CD8-positive, alpha-beta T cell (primary cell): ENCODE measurements at regions of chr19 and their contacts with region 1.

Region 1: GRCh38 chr19:14556662-14557188 is 15.1 kb downstream of the NDUFB7 start:
- DNase-seq: peak; percentile 44 to 85 (median 72)
- ATAC-seq: peak; percentile 87
- H3K4me3 ChIP-seq: peak overlapping the region; percentile 12 to 26
- H3K4me3 Mint-ChIP-seq: peak overlapping the region; percentile 60
- H3K27ac ChIP-seq: peak overlapping the region in 1 of 2 experiments; percentile 70
- H3K27ac Mint-ChIP-seq: peak overlapping the region; percentile 90
- H3K4me1 ChIP-seq: peaks cover 53% of the 10 kb centered on the region
- H3K4me1 Mint-ChIP-seq: peaks cover 53% of the 10 kb centered on the region
- H3K27me3 ChIP-seq: no peaks in the 10 kb centered on the region
- H3K27me3 Mint-ChIP-seq: no peaks in the 10 kb centered on the region
- CTCF ChIP-seq: peak; percentile 96

Region 2: DNA sequence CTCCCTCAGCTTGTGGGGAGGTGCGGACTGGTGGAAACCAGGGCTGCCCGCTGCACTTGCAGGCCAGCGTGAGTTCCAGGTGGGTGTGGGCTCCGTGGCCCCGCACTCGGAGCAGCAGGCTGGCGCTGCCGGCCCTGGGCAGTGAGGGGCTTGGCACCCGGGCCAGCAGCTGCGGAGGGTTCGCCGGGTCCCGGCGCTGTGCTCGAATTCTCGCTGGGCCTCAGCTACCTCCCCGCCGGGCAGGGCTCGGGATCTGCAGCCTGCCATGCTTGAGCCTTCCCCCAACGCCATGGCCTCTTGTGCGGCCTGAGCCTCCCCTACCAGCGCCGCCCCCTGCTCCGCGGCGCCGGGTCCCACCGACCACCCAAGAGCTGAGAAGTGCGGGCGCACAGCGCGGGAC is 279.1 kb before region 1 on chr19:
- CTCF ChIA-PET with region 1: no interaction called
- POLR2A ChIA-PET with region 1: no interaction called
- intact Hi-C with region 1: no loop called
- DNase-seq: no peak
- ATAC-seq: no peak
- H3K4me3 ChIP-seq: no peak overlapping the region
- H3K4me3 Mint-ChIP-seq: no peak overlapping the region
- H3K27ac ChIP-seq: no peak overlapping the region
- H3K27ac Mint-ChIP-seq: no peak overlapping the region
- H3K4me1 ChIP-seq: peaks cover 8% of the 10 kb centered on the region
- H3K4me1 Mint-ChIP-seq: peaks cover 15% of the 10 kb centered on the region
- H3K27me3 ChIP-seq: no peaks in the 10 kb centered on the region
- H3K27me3 Mint-ChIP-seq: no peaks in the 10 kb centered on the region
- CTCF ChIP-seq: no peak

Region 3: DNA sequence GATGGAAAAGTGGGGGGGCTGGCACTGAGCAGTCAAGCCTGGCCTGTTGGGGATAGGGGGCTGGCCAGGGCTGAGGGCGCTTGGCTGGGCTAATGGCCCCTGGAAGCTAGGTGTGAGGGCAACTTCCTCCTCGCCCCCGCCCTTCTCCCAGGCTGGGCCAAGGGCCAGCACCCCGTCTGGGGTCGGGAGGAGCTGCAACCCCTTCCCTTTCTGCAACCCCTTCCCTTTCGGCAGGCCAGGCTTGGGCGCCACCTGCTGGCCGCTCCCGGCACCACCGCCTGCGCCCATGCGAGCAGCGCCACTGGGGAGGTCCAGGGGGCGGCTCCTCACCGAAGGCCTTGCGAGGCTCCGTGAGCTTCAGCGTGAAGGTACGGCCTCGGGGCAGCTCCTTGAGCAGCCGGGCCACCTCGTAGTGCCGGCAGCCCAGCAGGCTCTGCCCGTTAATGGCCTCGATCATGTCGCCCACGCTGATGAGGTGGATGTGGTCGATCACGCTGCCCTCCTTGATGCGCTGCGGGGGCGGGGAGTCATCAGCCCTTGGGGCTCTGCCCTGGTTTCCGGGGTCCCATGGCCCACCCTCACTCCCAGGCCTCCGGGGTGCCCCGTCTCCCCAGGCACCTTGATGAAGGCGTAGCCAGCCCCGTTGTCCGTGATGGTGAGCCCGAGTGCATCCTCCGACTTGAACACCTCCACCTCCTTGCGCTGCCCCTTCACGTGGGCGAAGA is 76.6 kb before region 1 on chr19:
- CTCF ChIA-PET with region 1: interaction called, 13 read pairs
- POLR2A ChIA-PET with region 1: no interaction called
- intact Hi-C with region 1: no loop called
- DNase-seq: peak; percentile 55 to 85 (median 64)
- ATAC-seq: peak; percentile 52
- H3K4me3 ChIP-seq: no peak overlapping the region
- H3K4me3 Mint-ChIP-seq: no peak overlapping the region
- H3K27ac ChIP-seq: no peak overlapping the region
- H3K27ac Mint-ChIP-seq: no peak overlapping the region
- H3K4me1 ChIP-seq: peaks cover 16% of the 10 kb centered on the region
- H3K4me1 Mint-ChIP-seq: peaks cover 16% of the 10 kb centered on the region
- H3K27me3 ChIP-seq: peaks cover 0 to 5% of the 10 kb centered on the region in 2 experiments
- H3K27me3 Mint-ChIP-seq: peaks cover 2% of the 10 kb centered on the region
- CTCF ChIP-seq: peak; percentile 93

Region 4: GRCh38 chr19:14496028-14496833 is 60.5 kb before region 1 on chr19 and contains the start of gene GIPC1:
- CTCF ChIA-PET with region 1: interaction called, 12 read pairs
- POLR2A ChIA-PET with region 1: interaction called, 3 read pairs
- intact Hi-C with region 1: no loop called
- DNase-seq: peak; percentile 53 to 89 (median 80)
- ATAC-seq: peak; percentile 86
- H3K4me3 ChIP-seq: peak within 1 kb of the TSS; percentile 62 to 97
- H3K4me3 Mint-ChIP-seq: peak within 1 kb of the TSS; percentile 81
- H3K27ac ChIP-seq: peak within 1 kb of the TSS; percentile 42 to 58
- H3K27ac Mint-ChIP-seq: peak within 1 kb of the TSS; percentile 90
- H3K4me1 ChIP-seq: peaks cover 19% of the 10 kb centered on the region
- H3K4me1 Mint-ChIP-seq: peaks cover 24% of the 10 kb centered on the region
- H3K27me3 ChIP-seq: no peaks in the 10 kb centered on the region
- H3K27me3 Mint-ChIP-seq: no peaks in the 10 kb centered on the region
- CTCF ChIP-seq: no peak
- total RNA-seq, gene GIPC1: 15.6 to 16.0 TPM

Region 5: GRCh38 chr19:14505488-14506432 is 51.0 kb before region 1 on chr19:
- CTCF ChIA-PET with region 1: interaction called, 49 read pairs
- POLR2A ChIA-PET with region 1: interaction called, 11 read pairs
- intact Hi-C with region 1: loop called (anchors 1 kb)
- DNase-seq: peak; percentile 50 to 87 (median 76)
- ATAC-seq: peak; percentile 51
- H3K4me3 ChIP-seq: peak overlapping the region in 1 of 2 experiments; percentile 25
- H3K4me3 Mint-ChIP-seq: peak overlapping the region; percentile 56
- H3K27ac ChIP-seq: peak overlapping the region; percentile 62 to 76
- H3K27ac Mint-ChIP-seq: peak overlapping the region; percentile 96
- H3K4me1 ChIP-seq: peaks cover 49% of the 10 kb centered on the region
- H3K4me1 Mint-ChIP-seq: peaks cover 64% of the 10 kb centered on the region
- H3K27me3 ChIP-seq: no peaks in the 10 kb centered on the region
- H3K27me3 Mint-ChIP-seq: no peaks in the 10 kb centered on the region
- CTCF ChIP-seq: peak; percentile 82

Region 6: GRCh38 chr19:14529254-14530004 is 27.3 kb before region 1 on chr19 and contains the start of gene TECR:
- CTCF ChIA-PET with region 1: interaction called, 22 read pairs
- POLR2A ChIA-PET with region 1: interaction called, 4 read pairs
- intact Hi-C with region 1: loop called (anchors 1 kb)
- DNase-seq: peak; percentile 100
- ATAC-seq: peak; percentile 93
- H3K4me3 ChIP-seq: peak within 1 kb of the TSS; percentile 85 to 97
- H3K4me3 Mint-ChIP-seq: peak within 1 kb of the TSS; percentile 97
- H3K27ac ChIP-seq: peak within 1 kb of the TSS; percentile 88 to 89
- H3K27ac Mint-ChIP-seq: peak within 1 kb of the TSS; percentile 98
- H3K4me1 ChIP-seq: peaks cover 28% of the 10 kb centered on the region
- H3K4me1 Mint-ChIP-seq: peaks cover 54% of the 10 kb centered on the region
- H3K27me3 ChIP-seq: no peaks in the 10 kb centered on the region
- H3K27me3 Mint-ChIP-seq: no peaks in the 10 kb centered on the region
- CTCF ChIP-seq: no peak
- total RNA-seq, gene TECR: 300 to 325 TPM

Region 7: GRCh38 chr19:14542711-14543328 is 13.9 kb before region 1 on chr19:
- CTCF ChIA-PET with region 1: interaction called, 16 read pairs
- POLR2A ChIA-PET with region 1: no interaction called
- intact Hi-C with region 1: no loop called
- DNase-seq: no peak
- ATAC-seq: no peak
- H3K4me3 ChIP-seq: no peak overlapping the region
- H3K4me3 Mint-ChIP-seq: no peak overlapping the region
- H3K27ac ChIP-seq: no peak overlapping the region
- H3K27ac Mint-ChIP-seq: no peak overlapping the region
- H3K4me1 ChIP-seq: no peaks in the 10 kb centered on the region
- H3K4me1 Mint-ChIP-seq: peaks cover 39% of the 10 kb centered on the region
- H3K27me3 ChIP-seq: no peaks in the 10 kb centered on the region
- H3K27me3 Mint-ChIP-seq: no peaks in the 10 kb centered on the region
- CTCF ChIP-seq: no peak

Region 8: DNA sequence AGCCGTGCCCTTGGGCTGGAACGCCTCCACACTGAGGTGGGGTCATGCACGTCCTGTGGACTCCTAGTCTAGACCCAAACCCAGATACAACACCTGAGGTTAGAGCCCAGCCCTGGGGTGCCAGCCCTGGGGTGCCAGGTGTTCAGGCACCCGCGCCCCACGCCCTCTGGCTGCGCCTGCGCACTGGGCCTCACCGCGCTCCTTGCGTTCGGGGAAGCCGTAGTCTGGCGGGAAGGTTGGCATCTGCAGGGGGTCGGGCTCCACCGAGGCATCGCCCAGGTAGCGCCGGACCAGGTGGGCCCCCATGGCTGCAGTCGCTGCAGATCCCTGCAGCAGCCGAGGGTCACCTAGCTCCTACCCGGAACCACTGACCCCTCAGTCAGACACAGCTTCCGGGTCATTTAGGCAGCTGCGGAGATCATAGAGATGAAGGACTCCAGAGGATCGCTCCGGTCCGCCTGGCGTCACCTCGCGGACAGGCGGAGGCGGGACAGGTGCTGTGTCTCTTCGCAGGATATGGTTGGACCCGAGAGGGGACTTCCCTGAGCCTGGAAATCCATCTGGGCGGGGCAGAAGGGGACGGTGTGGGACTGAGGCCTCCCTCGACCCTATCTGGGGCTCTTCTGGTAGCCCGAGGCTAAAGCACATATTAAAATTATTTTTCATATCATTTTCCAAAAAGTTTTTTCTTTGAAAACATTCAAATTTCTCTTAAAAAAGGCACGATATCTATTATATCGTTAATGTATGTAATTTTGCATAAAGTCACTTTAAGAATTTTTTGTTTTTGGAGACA is 15.2 kb after region 1 on chr19 and contains the start of gene NDUFB7:
- CTCF ChIA-PET with region 1: interaction called, 15 read pairs
- POLR2A ChIA-PET with region 1: interaction called, 4 read pairs
- intact Hi-C with region 1: no loop called
- DNase-seq: peak; percentile 77 to 98 (median 88)
- ATAC-seq: peak; percentile 94
- H3K4me3 ChIP-seq: peak within 1 kb of the TSS; percentile 81 to 100
- H3K4me3 Mint-ChIP-seq: peak within 1 kb of the TSS; percentile 96
- H3K27ac ChIP-seq: peak within 1 kb of the TSS; percentile 60 to 73
- H3K27ac Mint-ChIP-seq: peak within 1 kb of the TSS; percentile 91
- H3K4me1 ChIP-seq: peaks cover 21% of the 10 kb centered on the region
- H3K4me1 Mint-ChIP-seq: peaks cover 42% of the 10 kb centered on the region
- H3K27me3 ChIP-seq: no peaks in the 10 kb centered on the region
- H3K27me3 Mint-ChIP-seq: no peaks in the 10 kb centered on the region
- CTCF ChIP-seq: peak; percentile 65
- total RNA-seq, gene NDUFB7: 27.8 to 34.3 TPM

Region 9: DNA sequence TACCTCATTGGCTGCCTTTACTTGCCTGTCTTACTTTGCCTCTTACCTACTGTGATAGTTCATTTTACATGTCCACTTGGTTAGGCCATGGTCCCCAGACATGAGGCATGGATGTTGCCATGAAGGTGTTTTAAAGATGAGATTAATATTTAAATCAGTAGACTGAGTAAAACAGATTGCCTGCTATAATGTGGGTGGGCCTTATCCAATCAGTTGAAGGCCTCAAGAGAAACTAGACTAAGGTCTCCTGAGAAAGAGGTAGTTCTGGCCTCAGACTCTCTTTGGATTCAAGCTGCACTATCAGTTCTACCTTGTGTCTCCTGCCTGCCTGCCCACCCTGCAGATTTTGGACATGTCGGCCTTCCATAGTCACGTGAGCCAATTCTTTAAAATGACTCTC is 91.8 kb after region 1 on chr19:
- CTCF ChIA-PET with region 1: no interaction called
- POLR2A ChIA-PET with region 1: no interaction called
- intact Hi-C with region 1: no loop called
- DNase-seq: no peak
- ATAC-seq: no peak
- H3K4me3 ChIP-seq: no peak overlapping the region
- H3K4me3 Mint-ChIP-seq: no peak overlapping the region
- H3K27ac ChIP-seq: no peak overlapping the region
- H3K27ac Mint-ChIP-seq: no peak overlapping the region
- H3K4me1 ChIP-seq: no peaks in the 10 kb centered on the region
- H3K4me1 Mint-ChIP-seq: no peaks in the 10 kb centered on the region
- H3K27me3 ChIP-seq: peaks cover 0 to 2% of the 10 kb centered on the region in 2 experiments
- H3K27me3 Mint-ChIP-seq: peaks cover 18% of the 10 kb centered on the region
- CTCF ChIP-seq: no peak